Caco-2 (cell line): ENCODE measurements at regions of chrX and their contacts with region 1.

Region 1: DNA sequence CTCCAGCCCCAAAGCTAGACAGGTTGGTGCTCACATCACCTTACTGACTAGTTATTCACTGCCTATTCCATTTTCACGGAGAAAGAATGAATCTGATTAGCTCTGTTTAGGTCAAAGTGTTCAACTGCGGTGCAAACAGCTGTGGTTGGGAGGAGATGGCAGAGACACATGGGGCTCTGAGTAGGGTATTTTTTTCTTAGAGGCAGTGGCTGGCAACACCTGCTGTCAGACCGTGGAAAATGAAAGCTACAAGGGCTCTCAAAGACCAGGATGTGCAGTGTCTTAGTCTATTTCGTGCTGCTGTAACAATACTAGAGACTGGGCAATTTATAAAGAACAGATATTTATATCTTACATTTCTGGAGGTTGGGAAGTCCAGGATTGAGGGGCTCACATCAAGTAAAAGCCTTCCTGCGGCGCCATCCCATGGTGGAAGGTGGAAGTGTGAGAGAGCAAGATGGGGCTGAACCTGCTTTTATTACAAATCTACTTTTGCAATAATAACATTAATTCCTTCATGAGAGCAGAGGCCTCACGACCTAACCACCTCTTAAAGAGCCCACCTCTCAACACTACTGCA is 10.6 kb downstream of the NYX start:
- DNase-seq: no peak
- H3K4me3 ChIP-seq: no peak overlapping the region
- H3K4me3 Mint-ChIP-seq: no peak overlapping the region
- H3K27ac Mint-ChIP-seq: no peak overlapping the region
- H3K4me1 ChIP-seq: no peaks in the 10 kb centered on the region
- H3K4me1 Mint-ChIP-seq: no peaks in the 10 kb centered on the region
- H3K27me3 ChIP-seq: no peaks in the 10 kb centered on the region
- H3K27me3 Mint-ChIP-seq: no peaks in the 10 kb centered on the region
- CTCF ChIP-seq: peak in 1 of 2 experiments; percentile 16

Region 2: GRCh38 chrX:41209853-41210252 is 247.8 kb before region 1 on chrX:
- CTCF ChIA-PET with region 1: no interaction called
- POLR2A ChIA-PET with region 1: no interaction called
- intact Hi-C with region 1: no loop called
- DNase-seq: no peak
- H3K4me3 ChIP-seq: no peak overlapping the region
- H3K4me3 Mint-ChIP-seq: no peak overlapping the region
- H3K27ac Mint-ChIP-seq: no peak overlapping the region
- H3K4me1 ChIP-seq: no peaks in the 10 kb centered on the region
- H3K4me1 Mint-ChIP-seq: no peaks in the 10 kb centered on the region
- H3K27me3 ChIP-seq: no peaks in the 10 kb centered on the region
- H3K27me3 Mint-ChIP-seq: no peaks in the 10 kb centered on the region
- CTCF ChIP-seq: no peak

Region 3: DNA sequence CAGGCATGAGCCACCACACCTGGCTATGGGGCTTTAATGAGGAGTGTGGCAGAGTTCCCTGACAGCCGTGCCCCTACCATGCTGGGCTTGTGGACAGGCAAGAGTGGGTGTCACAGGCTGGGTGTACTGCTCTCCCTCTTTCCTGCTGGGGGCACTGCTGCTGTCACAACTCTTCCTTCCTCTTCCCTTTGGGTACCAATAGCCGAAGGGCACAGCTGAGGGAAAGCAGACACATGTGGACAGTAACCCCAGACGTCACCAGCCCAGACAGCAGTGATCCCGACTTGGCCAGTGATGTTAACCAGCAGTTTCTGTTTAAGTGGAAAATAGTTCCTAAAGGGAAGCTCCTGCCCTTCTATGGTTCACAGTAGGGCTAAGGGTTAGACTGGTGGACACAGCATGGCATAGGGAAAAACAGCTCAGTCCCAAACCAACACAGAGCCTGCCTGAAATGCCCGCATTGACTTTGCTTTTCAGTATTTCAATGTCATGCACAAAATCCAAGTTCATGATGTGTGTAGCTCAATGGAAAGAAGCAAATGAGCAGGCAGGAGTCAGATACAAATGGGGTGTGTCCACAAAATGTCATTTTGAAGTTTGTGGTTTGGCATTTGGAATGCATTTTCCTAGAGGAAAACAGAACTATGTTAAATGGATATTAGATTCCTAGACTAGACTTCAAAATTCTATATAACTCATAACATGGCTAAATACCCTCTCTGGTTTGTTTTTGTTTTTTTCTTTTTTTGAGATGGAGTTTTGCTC is 148.6 kb before region 1 on chrX:
- CTCF ChIA-PET with region 1: no interaction called
- POLR2A ChIA-PET with region 1: no interaction called
- intact Hi-C with region 1: no loop called
- DNase-seq: no peak
- H3K4me3 ChIP-seq: no peak overlapping the region
- H3K4me3 Mint-ChIP-seq: no peak overlapping the region
- H3K27ac Mint-ChIP-seq: no peak overlapping the region
- H3K4me1 ChIP-seq: no peaks in the 10 kb centered on the region
- H3K4me1 Mint-ChIP-seq: no peaks in the 10 kb centered on the region
- H3K27me3 ChIP-seq: no peaks in the 10 kb centered on the region
- H3K27me3 Mint-ChIP-seq: no peaks in the 10 kb centered on the region
- CTCF ChIP-seq: no peak

Region 4: GRCh38 chrX:41335656-41336331 is 121.9 kb before region 1 on chrX:
- CTCF ChIA-PET with region 1: no interaction called
- POLR2A ChIA-PET with region 1: no interaction called
- intact Hi-C with region 1: no loop called
- DNase-seq: no peak
- H3K4me3 ChIP-seq: peak overlapping the region; percentile 85
- H3K4me3 Mint-ChIP-seq: peak overlapping the region; percentile 88
- H3K27ac Mint-ChIP-seq: peak overlapping the region; percentile 100
- H3K4me1 ChIP-seq: peaks cover 8% of the 10 kb centered on the region; the same call in 1 of the 2 replicates
- H3K4me1 Mint-ChIP-seq: no peaks in the 10 kb centered on the region
- H3K27me3 ChIP-seq: no peaks in the 10 kb centered on the region
- H3K27me3 Mint-ChIP-seq: no peaks in the 10 kb centered on the region
- CTCF ChIP-seq: no peak

Region 5: GRCh38 chrX:41475591-41476241 is 18.0 kb after region 1 on chrX:
- CTCF ChIA-PET with region 1: interaction called, 12 read pairs
- POLR2A ChIA-PET with region 1: no interaction called
- intact Hi-C with region 1: no loop called
- DNase-seq: peak; percentile 69 to 71
- H3K4me3 ChIP-seq: no peak overlapping the region
- H3K4me3 Mint-ChIP-seq: peak overlapping the region; percentile 67
- H3K27ac Mint-ChIP-seq: peak overlapping the region; percentile 95
- H3K4me1 ChIP-seq: peaks cover 36% of the 10 kb centered on the region
- H3K4me1 Mint-ChIP-seq: peaks cover 11% of the 10 kb centered on the region
- H3K27me3 ChIP-seq: no peaks in the 10 kb centered on the region
- H3K27me3 Mint-ChIP-seq: no peaks in the 10 kb centered on the region
- CTCF ChIP-seq: no peak

Region 6: DNA sequence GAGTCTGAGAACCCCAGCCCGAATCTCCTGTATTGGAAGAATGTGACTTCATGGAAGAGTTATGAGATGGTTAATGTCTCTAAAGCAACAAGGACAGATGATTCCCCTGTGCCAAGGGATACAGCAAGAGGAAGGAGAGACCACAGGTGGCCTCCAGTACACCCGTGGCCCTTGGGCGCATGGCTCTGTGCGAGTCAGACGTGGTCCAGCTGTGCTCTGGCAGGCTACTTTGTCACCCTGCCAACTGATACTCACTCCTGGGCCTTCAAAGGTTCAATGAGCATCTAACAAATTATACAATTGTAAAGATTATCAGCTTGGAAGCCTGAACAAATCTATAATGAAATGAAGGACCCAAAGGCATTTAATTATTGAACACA is 61.1 kb after region 1 on chrX:
- CTCF ChIA-PET with region 1: no interaction called
- POLR2A ChIA-PET with region 1: no interaction called
- intact Hi-C with region 1: no loop called
- DNase-seq: no peak
- H3K4me3 ChIP-seq: no peak overlapping the region
- H3K4me3 Mint-ChIP-seq: no peak overlapping the region
- H3K27ac Mint-ChIP-seq: no peak overlapping the region
- H3K4me1 ChIP-seq: 0 out of 2 replicates have a peak, but pooled peaks cover 3% of the 10 kb centered on the region
- H3K4me1 Mint-ChIP-seq: no peaks in the 10 kb centered on the region
- H3K27me3 ChIP-seq: no peaks in the 10 kb centered on the region
- H3K27me3 Mint-ChIP-seq: no peaks in the 10 kb centered on the region
- CTCF ChIP-seq: no peak